Activated T-helper 2 cell treated with anti-CD3 and anti-CD28 coated beads, Interferon-gamma antibody, Interleukin-2, Interleukin-4, amounts not matched to agents 10 μg/mL and 5 μg/mL and 100 μg/mL, durations not matched to agents 14 hours and 24 hours and 36 hours (primary cell): ENCODE measurements at regions of chr10 and their contacts with region 1.

Region 1: GRCh38 chr10:3948843-3949242 is 163.8 kb upstream of the KLF6 start:
- DNase-seq: peak; percentile 71
- H3K4me3 Mint-ChIP-seq: peak overlapping the region; percentile 45
- H3K27ac Mint-ChIP-seq: peak overlapping the region; percentile 79
- H3K4me1 Mint-ChIP-seq: peaks cover 50% of the 10 kb centered on the region
- H3K27me3 Mint-ChIP-seq: no peaks in the 10 kb centered on the region

Region 2: GRCh38 chr10:3924344-3924743 is 24.5 kb before region 1 on chr10:
- intact Hi-C with region 1: no loop called
- DNase-seq: no peak
- H3K4me3 Mint-ChIP-seq: no peak overlapping the region
- H3K27ac Mint-ChIP-seq: no peak overlapping the region
- H3K4me1 Mint-ChIP-seq: peaks cover 23% of the 10 kb centered on the region
- H3K27me3 Mint-ChIP-seq: no peaks in the 10 kb centered on the region

Region 3: GRCh38 chr10:3995302-3996210 is 46.7 kb after region 1 on chr10:
- intact Hi-C with region 1: no loop called
- DNase-seq: no peak
- H3K4me3 Mint-ChIP-seq: no peak overlapping the region
- H3K27ac Mint-ChIP-seq: no peak overlapping the region
- H3K4me1 Mint-ChIP-seq: peaks cover 10% of the 10 kb centered on the region
- H3K27me3 Mint-ChIP-seq: no peaks in the 10 kb centered on the region

Region 4: GRCh38 chr10:4246881-4247358 is 298.1 kb after region 1 on chr10:
- intact Hi-C with region 1: loop called (anchors 1 kb)
- DNase-seq: no peak
- H3K4me3 Mint-ChIP-seq: no peak overlapping the region
- H3K27ac Mint-ChIP-seq: no peak overlapping the region
- H3K4me1 Mint-ChIP-seq: peaks cover 56% of the 10 kb centered on the region
- H3K27me3 Mint-ChIP-seq: peaks cover 2% of the 10 kb centered on the region